ENCODE measurements at regions of chr1 and their contacts with region 1.

Region 1: GRCh38 chr1:161244888-161245287 is 6.9 kb upstream of the NR1I3 start:
- DNase-seq: no peak
- ATAC-seq: no peak
- H3K4me3 ChIP-seq: no peak overlapping the region
- H3K27ac ChIP-seq: no peak overlapping the region
- H3K4me1 ChIP-seq: no peaks in the 10 kb centered on the region
- H3K27me3 ChIP-seq: no peaks in the 10 kb centered on the region
- CTCF ChIP-seq: no peak
- EP300 ChIP-seq: no peak
- POLR2A ChIP-seq: no peak
- RAD21 ChIP-seq: no peak

Region 2: GRCh38 chr1:159829273-159829634 is 1415.6 kb before region 1 on chr1:
- CTCF ChIA-PET with region 1: no interaction called
- POLR2A ChIA-PET with region 1: no interaction called
- RAD21 ChIA-PET with region 1: no interaction called
- SMC1A ChIA-PET with region 1: no interaction called
- in situ Hi-C with region 1: no loop called
- intact Hi-C with region 1: no loop called
- DNase-seq: peak; percentile 40
- ATAC-seq: peak; percentile 94
- H3K4me3 ChIP-seq: no peak overlapping the region
- H3K27ac ChIP-seq: no peak overlapping the region
- H3K4me1 ChIP-seq: peaks cover 35% of the 10 kb centered on the region
- H3K27me3 ChIP-seq: no peaks in the 10 kb centered on the region
- CTCF ChIP-seq: peak; percentile 46 to 71 (median 66)
- EP300 ChIP-seq: no peak
- POLR2A ChIP-seq: no peak
- RAD21 ChIP-seq: 0 out of 2 replicates have a peak, but pooled peaks have one; percentile 26

Region 3: GRCh38 chr1:161045750-161046571 is 198.9 kb before region 1 on chr1 and contains the start of gene USF1:
- CTCF ChIA-PET with region 1: no interaction called
- POLR2A ChIA-PET with region 1: no interaction called
- RAD21 ChIA-PET with region 1: no interaction called
- SMC1A ChIA-PET with region 1: no interaction called
- in situ Hi-C with region 1: no loop called
- intact Hi-C with region 1: no loop called
- DNase-seq: peak; percentile 92
- ATAC-seq: peak; percentile 86
- H3K4me3 ChIP-seq: peak within 1 kb of the TSS; percentile 90
- H3K27ac ChIP-seq: peak within 1 kb of the TSS; percentile 100
- H3K4me1 ChIP-seq: peaks cover 15% of the 10 kb centered on the region
- H3K27me3 ChIP-seq: no peaks in the 10 kb centered on the region
- CTCF ChIP-seq: no peak
- EP300 ChIP-seq: no peak
- POLR2A ChIP-seq: peak; percentile 90
- RAD21 ChIP-seq: no peak
- polyA plus RNA-seq, gene USF1: 9.4 to 26.3 TPM

Region 4: GRCh38 chr1:161258439-161259344 is 13.8 kb after region 1 on chr1 and contains the start of gene PCP4L1:
- CTCF ChIA-PET with region 1: interaction called, 4 read pairs
- POLR2A ChIA-PET with region 1: interaction called, 7 read pairs
- RAD21 ChIA-PET with region 1: no interaction called
- SMC1A ChIA-PET with region 1: interaction called, 10 read pairs
- in situ Hi-C with region 1: no loop called
- intact Hi-C with region 1: no loop called
- DNase-seq: no peak
- ATAC-seq: peak; percentile 76
- H3K4me3 ChIP-seq: peak within 1 kb of the TSS; percentile 47
- H3K27ac ChIP-seq: no peak within 1 kb of the TSS
- H3K4me1 ChIP-seq: peaks cover 13% of the 10 kb centered on the region
- H3K27me3 ChIP-seq: peaks cover 0 to 5% of the 10 kb centered on the region in 2 experiments; a peak in 1 of 4 replicates
- CTCF ChIP-seq: no peak
- EP300 ChIP-seq: no peak
- POLR2A ChIP-seq: no peak
- RAD21 ChIP-seq: no peak
- polyA plus RNA-seq, gene PCP4L1: 1.0 to 1.1 TPM

Region 5: GRCh38 chr1:161287482-161288054 is 42.7 kb after region 1 on chr1:
- CTCF ChIA-PET with region 1: interaction called, 9 read pairs
- POLR2A ChIA-PET with region 1: no interaction called
- RAD21 ChIA-PET with region 1: interaction called, 6 read pairs
- SMC1A ChIA-PET with region 1: interaction called, 9 read pairs
- in situ Hi-C with region 1: no loop called
- intact Hi-C with region 1: loop called (anchors 5 kb)
- DNase-seq: no peak
- ATAC-seq: peak; percentile 27; the same call in 1 of the 3 replicates
- H3K4me3 ChIP-seq: no peak overlapping the region
- H3K27ac ChIP-seq: no peak overlapping the region
- H3K4me1 ChIP-seq: no peaks in the 10 kb centered on the region
- H3K27me3 ChIP-seq: peaks cover 0 to 3% of the 10 kb centered on the region in 2 experiments; a peak in 1 of 4 replicates
- CTCF ChIP-seq: no peak
- EP300 ChIP-seq: no peak
- POLR2A ChIP-seq: no peak
- RAD21 ChIP-seq: no peak

Measured in GM12878 (cell line).